Naive thymus-derived CD4-positive, alpha-beta T cell (primary cell): ENCODE measurements at regions of chr3 and their contacts with region 1.

Region 1: DNA sequence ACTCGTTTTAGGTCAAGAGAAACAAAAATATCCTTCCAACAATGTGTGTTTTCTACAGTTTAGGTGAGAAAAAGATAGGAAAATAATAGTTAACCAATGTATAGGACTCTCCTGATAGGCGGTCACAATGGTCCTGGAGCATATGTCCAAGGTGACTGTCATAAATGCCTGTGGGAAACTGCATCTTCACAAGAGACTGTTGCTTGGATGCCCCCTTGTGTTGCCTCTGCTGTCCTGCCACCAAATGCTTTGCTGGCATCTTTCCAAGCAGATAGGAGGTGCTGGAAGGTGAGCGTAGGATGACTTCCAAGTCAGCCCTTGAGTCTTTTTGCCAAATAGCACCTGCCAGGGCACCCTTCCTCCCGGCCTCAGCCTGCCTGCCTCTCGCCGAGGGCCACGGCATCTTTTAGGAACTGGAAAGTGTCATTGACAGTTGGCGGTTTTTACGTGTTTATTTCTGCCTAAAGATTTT is 24.1 kb upstream of the SACM1L start:
- DNase-seq: peak in 8 of 9 donors; percentile 49 to 79 (median 75)
- ATAC-seq: peak; percentile 74
- H3K4me3 ChIP-seq: peak overlapping the region; percentile 64
- H3K4me3 Mint-ChIP-seq: peak overlapping the region; percentile 80 to 96 (median 89)
- H3K27ac ChIP-seq: peak overlapping the region; percentile 81
- H3K27ac Mint-ChIP-seq: peak overlapping the region; percentile 85 to 97 (median 92)
- H3K4me1 ChIP-seq: peaks cover 13 to 19% of the 10 kb centered on the region in 2 donors
- H3K4me1 Mint-ChIP-seq: peaks cover 15 to 49% (median 33%) of the 10 kb centered on the region in 7 donors
- H3K27me3 ChIP-seq: no peaks in the 10 kb centered on the region
- H3K27me3 Mint-ChIP-seq: no peaks in the 10 kb centered on the region

Region 2: GRCh38 chr3:45280232-45280631 is 384.9 kb before region 1 on chr3:
- CTCF ChIA-PET with region 1: no interaction called
- POLR2A ChIA-PET with region 1: no interaction called
- intact Hi-C with region 1: no loop called
- DNase-seq: no peak
- ATAC-seq: no peak
- H3K4me3 ChIP-seq: no peak overlapping the region
- H3K4me3 Mint-ChIP-seq: no peak overlapping the region
- H3K27ac ChIP-seq: no peak overlapping the region
- H3K27ac Mint-ChIP-seq: no peak overlapping the region
- H3K4me1 ChIP-seq: no peaks in the 10 kb centered on the region
- H3K4me1 Mint-ChIP-seq: no peaks in the 10 kb centered on the region
- H3K27me3 ChIP-seq: no peaks in the 10 kb centered on the region
- H3K27me3 Mint-ChIP-seq: peaks cover 15 to 60% (median 22%) of the 10 kb centered on the region in 5 donors

Region 3: DNA sequence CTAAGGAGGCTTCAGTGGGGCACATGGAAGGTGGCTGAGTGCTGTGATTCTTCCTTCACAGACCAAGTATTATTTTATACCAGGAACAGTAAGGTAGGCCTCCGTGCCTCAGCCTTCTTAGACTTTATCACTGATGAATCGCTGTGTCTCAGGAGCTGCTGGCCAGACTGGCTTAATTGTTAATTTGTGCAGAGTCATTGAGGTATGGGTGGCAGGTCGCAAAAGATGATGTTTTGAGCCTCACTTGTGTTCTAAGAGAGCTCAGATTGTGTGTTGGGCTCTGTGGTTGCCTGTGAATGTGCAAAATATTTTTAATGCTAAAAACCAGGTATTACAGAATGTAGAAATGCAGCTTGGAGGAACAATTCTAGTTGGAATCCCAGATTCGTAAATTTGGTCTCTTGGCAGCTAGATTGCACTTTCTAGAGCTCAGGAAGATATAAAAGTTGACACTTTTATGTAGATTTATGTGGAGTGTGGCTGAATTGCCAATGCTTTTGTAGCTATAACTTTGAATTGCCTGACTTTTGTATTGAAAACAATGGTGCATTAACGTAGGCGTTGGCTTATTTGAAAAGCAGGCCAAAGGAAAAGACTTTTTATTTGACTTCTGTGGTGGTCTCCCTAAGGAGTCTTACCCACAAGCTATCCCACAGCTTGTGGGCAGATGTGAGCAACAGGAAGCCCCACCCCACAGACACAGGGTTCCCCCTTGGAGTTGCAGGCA is 223.4 kb before region 1 on chr3:
- CTCF ChIA-PET with region 1: no interaction called
- POLR2A ChIA-PET with region 1: no interaction called
- intact Hi-C with region 1: no loop called
- DNase-seq: no peak
- ATAC-seq: no peak
- H3K4me3 ChIP-seq: no peak overlapping the region
- H3K4me3 Mint-ChIP-seq: no peak overlapping the region
- H3K27ac ChIP-seq: no peak overlapping the region
- H3K27ac Mint-ChIP-seq: peak overlapping the region in 1 of 9 donors; percentile 21
- H3K4me1 ChIP-seq: no peaks in the 10 kb centered on the region
- H3K4me1 Mint-ChIP-seq: peaks cover 0 to 25% (median 5%) of the 10 kb centered on the region in 7 donors
- H3K27me3 ChIP-seq: no peaks in the 10 kb centered on the region
- H3K27me3 Mint-ChIP-seq: no peaks in the 10 kb centered on the region

Region 4: DNA sequence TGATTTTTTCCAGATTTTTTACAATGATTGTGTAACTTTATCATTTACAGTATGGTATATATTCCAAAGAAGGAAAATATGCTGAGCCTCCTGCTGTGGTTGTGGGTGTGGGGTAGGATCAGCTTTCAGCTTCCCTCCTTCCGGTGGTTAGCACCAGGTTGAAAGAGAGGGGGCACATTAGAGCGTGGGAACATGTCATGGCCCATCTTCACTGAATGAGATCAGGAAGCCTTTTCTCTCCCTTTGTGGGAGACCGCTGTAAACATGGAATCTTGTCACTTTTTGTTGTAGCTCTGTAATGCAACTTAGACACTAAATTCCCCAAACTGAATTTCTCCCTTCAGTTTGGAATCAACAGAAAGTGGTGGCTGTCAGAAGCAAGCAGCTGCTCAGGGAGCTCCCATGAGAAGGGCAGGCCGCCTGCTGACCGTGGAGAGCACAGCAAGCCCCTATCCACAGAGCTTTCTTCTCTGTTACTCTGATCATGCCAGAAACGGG is 157.3 kb before region 1 on chr3:
- CTCF ChIA-PET with region 1: interaction called, 62 read pairs
- POLR2A ChIA-PET with region 1: interaction called, 5 read pairs
- intact Hi-C with region 1: no loop called
- DNase-seq: peak in 3 of 9 donors; percentile 8 to 17 (median 14)
- ATAC-seq: no peak
- H3K4me3 ChIP-seq: no peak overlapping the region
- H3K4me3 Mint-ChIP-seq: no peak overlapping the region
- H3K27ac ChIP-seq: no peak overlapping the region
- H3K27ac Mint-ChIP-seq: no peak overlapping the region
- H3K4me1 ChIP-seq: peaks cover 0 to 13% of the 10 kb centered on the region in 2 donors
- H3K4me1 Mint-ChIP-seq: peaks cover 0 to 13% (median 0%) of the 10 kb centered on the region in 7 donors
- H3K27me3 ChIP-seq: no peaks in the 10 kb centered on the region
- H3K27me3 Mint-ChIP-seq: no peaks in the 10 kb centered on the region

Region 5: DNA sequence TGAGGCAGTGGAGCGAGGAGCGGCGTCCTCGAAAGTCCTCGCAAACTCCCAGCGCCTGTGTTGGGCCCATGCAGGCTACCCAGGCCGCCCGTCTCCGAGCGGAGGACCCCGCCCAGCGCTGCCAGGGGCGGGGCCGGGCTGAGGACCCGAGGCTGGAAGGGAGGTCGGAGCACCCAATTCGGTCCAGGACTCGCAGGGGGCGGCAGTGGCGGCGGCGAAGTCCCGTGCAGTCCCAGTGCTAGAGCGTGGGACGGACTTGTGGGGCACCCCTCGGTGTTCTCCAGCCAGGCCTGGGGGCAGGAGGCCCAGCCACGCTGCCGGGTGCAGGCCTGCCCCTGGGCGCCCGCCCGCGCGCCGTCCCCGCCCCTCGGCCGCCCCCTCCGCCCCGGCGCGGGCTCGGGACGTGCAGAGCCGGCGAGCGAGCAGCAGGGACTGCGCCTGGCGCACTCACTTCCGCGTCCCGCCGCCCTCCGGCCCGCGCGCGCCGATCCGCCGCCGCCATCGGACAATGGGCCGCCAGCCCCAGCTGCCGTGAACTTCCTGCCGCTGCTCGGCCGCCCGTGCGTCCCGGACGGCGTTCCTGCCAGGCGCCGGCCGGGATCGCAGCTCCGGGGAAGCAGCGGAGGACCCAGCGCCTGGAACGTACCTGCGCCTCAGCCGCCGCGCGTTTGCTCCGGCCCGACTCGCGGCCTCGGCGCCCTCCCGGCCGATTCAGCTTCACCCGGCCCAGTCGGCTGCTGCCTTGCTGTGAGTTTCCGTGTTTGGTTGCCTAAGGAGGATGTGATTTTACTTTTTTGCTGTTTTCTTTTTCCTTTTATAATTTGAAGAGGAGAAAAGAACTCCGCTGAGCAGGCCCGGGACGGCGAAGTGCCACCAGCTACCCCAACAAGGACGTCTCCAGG is 71.2 kb before region 1 on chr3:
- CTCF ChIA-PET with region 1: interaction called, 3 read pairs
- POLR2A ChIA-PET with region 1: no interaction called
- intact Hi-C with region 1: loop called in 1 of 2 experiments (anchors 1 kb)
- DNase-seq: peak; percentile 46 to 83 (median 70)
- ATAC-seq: peak; percentile 83
- H3K4me3 ChIP-seq: peak overlapping the region; percentile 71
- H3K4me3 Mint-ChIP-seq: peak overlapping the region; percentile 84 to 99 (median 90)
- H3K27ac ChIP-seq: peak overlapping the region; percentile 72
- H3K27ac Mint-ChIP-seq: peak overlapping the region; percentile 85 to 96 (median 91)
- H3K4me1 ChIP-seq: peaks cover 44 to 58% of the 10 kb centered on the region in 2 donors
- H3K4me1 Mint-ChIP-seq: peaks cover 48 to 61% (median 55%) of the 10 kb centered on the region in 7 donors
- H3K27me3 ChIP-seq: no peaks in the 10 kb centered on the region
- H3K27me3 Mint-ChIP-seq: peaks cover 0 to 3% (median 0%) of the 10 kb centered on the region in 5 donors

Region 6: DNA sequence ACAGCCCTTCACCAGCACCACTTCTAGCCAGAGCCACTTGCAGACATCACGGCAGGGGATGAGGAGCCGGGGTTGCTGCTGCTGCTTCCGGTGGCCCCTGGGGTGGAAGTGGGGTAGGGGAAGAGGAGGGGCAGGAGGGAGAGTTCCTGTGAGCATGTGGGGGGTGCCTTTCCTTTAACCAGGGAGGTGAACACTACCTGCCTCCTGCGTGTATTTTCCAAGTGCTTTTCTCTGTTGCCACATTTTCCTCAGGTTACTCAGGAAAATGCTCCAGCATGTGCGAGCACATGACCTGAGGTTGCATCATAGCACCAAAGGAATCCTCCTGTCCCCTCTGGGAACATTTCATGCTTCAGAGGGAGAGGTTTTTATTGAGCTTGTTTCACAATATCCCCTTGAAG is 11.9 kb after region 1 on chr3:
- CTCF ChIA-PET with region 1: interaction called, 18 read pairs
- POLR2A ChIA-PET with region 1: interaction called, 14 read pairs
- intact Hi-C with region 1: loop called in 1 of 2 experiments (anchors 1 kb)
- DNase-seq: peak in 8 of 9 donors; percentile 37 to 79 (median 77)
- ATAC-seq: peak; percentile 92
- H3K4me3 ChIP-seq: peak overlapping the region; percentile 55
- H3K4me3 Mint-ChIP-seq: peak overlapping the region; percentile 70 to 88 (median 82)
- H3K27ac ChIP-seq: peak overlapping the region; percentile 74
- H3K27ac Mint-ChIP-seq: peak overlapping the region; percentile 92 to 98 (median 96)
- H3K4me1 ChIP-seq: peaks cover 11 to 21% of the 10 kb centered on the region in 2 donors
- H3K4me1 Mint-ChIP-seq: peaks cover 16 to 53% (median 43%) of the 10 kb centered on the region in 7 donors
- H3K27me3 ChIP-seq: no peaks in the 10 kb centered on the region
- H3K27me3 Mint-ChIP-seq: no peaks in the 10 kb centered on the region

Region 7: DNA sequence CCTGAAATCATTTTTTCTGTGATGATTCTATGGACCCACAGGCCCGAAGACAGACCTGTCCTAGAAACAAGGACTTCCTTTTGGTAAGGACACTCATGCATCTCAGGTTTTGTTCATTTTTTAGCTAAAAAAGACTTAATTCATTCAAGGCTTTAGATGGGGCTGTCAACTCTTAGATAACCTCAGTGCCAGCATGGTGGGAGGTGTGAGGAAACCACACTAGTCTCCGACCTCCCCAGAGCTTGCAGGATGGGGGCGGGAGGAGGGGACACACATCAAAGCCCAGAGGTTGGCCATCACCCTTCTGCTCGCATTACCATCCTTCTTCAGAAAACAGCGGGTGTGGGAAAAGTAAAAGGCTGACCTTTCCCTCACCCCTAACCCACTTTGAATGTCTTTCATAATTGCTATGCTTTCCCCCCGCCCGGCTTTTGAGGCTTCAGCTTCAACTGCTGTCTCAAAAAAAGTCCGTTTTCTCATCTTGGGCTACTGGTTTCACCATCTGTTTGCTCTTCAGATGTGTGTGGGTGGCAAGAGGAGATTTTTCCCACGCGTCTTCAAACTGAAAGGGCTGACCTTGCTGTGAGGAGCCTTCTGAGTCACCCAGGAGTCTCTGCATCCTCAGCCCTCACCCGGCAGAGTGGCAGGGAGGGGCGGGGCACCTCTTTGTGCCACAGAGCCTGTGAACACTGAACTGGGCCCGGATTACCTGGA is 250.5 kb after region 1 on chr3:
- CTCF ChIA-PET with region 1: no interaction called
- POLR2A ChIA-PET with region 1: no interaction called
- intact Hi-C with region 1: no loop called
- DNase-seq: peak in 8 of 9 donors; percentile 24 to 81 (median 38)
- ATAC-seq: peak; percentile 86
- H3K4me3 ChIP-seq: peak overlapping the region; percentile 53
- H3K4me3 Mint-ChIP-seq: peak overlapping the region; percentile 70 to 90 (median 83)
- H3K27ac ChIP-seq: no peak overlapping the region
- H3K27ac Mint-ChIP-seq: peak overlapping the region; percentile 36 to 82 (median 69)
- H3K4me1 ChIP-seq: peaks cover 15 to 24% of the 10 kb centered on the region in 2 donors
- H3K4me1 Mint-ChIP-seq: peaks cover 17 to 45% (median 25%) of the 10 kb centered on the region in 7 donors
- H3K27me3 ChIP-seq: no peaks in the 10 kb centered on the region
- H3K27me3 Mint-ChIP-seq: peaks cover 0 to 41% (median 0%) of the 10 kb centered on the region in 5 donors